Caco-2 (cell line): ENCODE measurements at regions of chr14 and their contacts with region 1.

Region 1: DNA sequence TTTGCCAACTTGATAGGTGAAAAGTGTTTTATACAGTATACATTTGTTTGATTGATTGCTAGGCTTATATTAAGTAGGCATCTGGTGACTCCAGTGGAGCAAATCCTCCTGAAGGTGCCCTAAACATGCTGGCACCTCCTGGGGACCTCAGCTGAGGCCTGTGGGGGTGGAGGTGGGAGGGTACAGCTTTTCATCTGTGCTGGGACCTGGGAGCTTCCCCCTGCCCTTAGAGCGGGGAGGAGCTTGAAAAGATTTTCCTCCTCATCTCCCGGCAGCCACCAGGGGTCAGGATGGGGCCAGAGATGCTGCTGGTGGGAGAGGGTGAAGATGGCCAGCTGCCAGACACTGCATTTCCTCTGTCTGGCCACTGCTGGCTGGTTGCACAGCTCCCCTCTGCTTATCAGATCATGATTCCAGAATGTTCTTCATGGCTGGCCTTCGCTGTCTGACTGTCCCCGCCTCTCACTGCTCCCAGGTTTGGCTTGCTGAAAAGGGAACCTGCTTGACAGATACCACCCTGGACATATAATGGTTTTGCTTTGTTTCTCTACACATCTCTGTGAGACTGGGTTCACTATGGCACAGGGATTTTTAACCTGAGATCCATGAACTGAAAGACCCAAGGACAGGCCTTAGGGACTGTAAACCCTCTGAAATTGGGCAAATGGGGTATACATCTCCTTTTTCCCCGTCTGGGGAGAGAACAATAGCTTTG is 10.5 kb upstream of the JPH4 start:
- DNase-seq: peak; percentile 88 to 90
- H3K4me3 ChIP-seq: no peak overlapping the region
- H3K4me3 Mint-ChIP-seq: no peak overlapping the region
- H3K27ac Mint-ChIP-seq: no peak overlapping the region
- H3K4me1 ChIP-seq: no peaks in the 10 kb centered on the region
- H3K4me1 Mint-ChIP-seq: no peaks in the 10 kb centered on the region
- H3K27me3 ChIP-seq: no peaks in the 10 kb centered on the region
- H3K27me3 Mint-ChIP-seq: peaks cover 2% of the 10 kb centered on the region
- CTCF ChIP-seq: peak; percentile 85 to 94

Region 2: DNA sequence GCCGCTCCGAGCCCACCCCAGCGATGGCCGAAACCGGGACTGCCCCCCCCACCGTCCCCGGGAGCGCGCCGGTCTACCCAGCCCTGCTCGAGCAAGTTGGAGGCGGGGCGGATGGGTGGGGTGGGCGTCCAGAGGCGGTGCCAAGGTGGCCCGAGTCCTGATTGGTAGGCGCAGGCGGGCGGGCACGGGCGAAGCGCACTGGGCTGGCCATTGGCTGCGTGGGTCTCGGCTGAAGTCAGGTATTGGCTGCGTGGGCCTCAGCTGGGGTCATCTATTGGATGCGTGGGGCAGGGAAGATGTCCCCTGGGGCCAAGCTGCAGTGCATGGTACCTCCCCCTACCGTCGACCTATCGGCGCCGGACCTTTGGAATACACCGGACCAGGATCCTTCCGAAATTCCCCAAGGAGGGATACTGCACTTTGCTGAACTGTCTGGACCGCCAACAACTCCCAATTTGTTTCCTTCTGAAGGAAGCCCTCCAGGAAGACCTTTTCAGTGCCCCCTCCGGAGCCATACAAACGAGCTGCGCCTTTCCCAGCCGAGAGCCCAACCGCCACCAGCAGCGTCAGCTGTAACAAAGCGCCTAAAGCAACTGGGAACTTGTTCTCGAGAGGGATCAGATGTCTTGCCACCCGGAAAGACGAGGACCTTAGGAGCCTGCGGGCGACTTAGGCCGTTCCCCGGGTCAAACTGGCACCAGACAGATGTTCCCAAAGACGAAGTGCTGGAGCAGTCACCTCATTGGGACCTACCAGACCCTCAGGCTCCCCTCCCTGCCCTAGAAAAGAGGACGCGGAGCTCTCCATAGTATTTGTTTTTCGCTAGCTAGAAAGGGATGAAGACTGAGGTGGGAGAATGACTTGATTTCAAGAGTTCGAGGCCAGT is 302.8 kb before region 1 on chr14 and contains the start of gene HOMEZ:
- CTCF ChIA-PET with region 1: no interaction called
- POLR2A ChIA-PET with region 1: no interaction called
- intact Hi-C with region 1: no loop called
- DNase-seq: peak; percentile 99
- H3K4me3 ChIP-seq: peak within 1 kb of the TSS; percentile 75
- H3K4me3 Mint-ChIP-seq: peak within 1 kb of the TSS; percentile 90
- H3K27ac Mint-ChIP-seq: peak within 1 kb of the TSS; percentile 95
- H3K4me1 ChIP-seq: 0 out of 2 replicates have a peak, but pooled peaks cover 4% of the 10 kb centered on the region
- H3K4me1 Mint-ChIP-seq: peaks cover 6% of the 10 kb centered on the region
- H3K27me3 ChIP-seq: no peaks in the 10 kb centered on the region
- H3K27me3 Mint-ChIP-seq: no peaks in the 10 kb centered on the region
- CTCF ChIP-seq: peak in 1 of 2 experiments; percentile 18
- total RNA-seq, gene HOMEZ: 7.4 and 7.6 TPM in 2 replicates

Region 3: GRCh38 chr14:23631702-23632460 is 42.8 kb after region 1 on chr14:
- CTCF ChIA-PET with region 1: interaction called, 20 read pairs
- POLR2A ChIA-PET with region 1: no interaction called
- intact Hi-C with region 1: loop called (anchors 1 kb)
- DNase-seq: peak in 1 of 2 experiments; percentile 71
- H3K4me3 ChIP-seq: no peak overlapping the region
- H3K4me3 Mint-ChIP-seq: no peak overlapping the region
- H3K27ac Mint-ChIP-seq: no peak overlapping the region
- H3K4me1 ChIP-seq: no peaks in the 10 kb centered on the region
- H3K4me1 Mint-ChIP-seq: no peaks in the 10 kb centered on the region
- H3K27me3 ChIP-seq: no peaks in the 10 kb centered on the region
- H3K27me3 Mint-ChIP-seq: no peaks in the 10 kb centered on the region
- CTCF ChIP-seq: peak; percentile 83 to 89

Region 4: DNA sequence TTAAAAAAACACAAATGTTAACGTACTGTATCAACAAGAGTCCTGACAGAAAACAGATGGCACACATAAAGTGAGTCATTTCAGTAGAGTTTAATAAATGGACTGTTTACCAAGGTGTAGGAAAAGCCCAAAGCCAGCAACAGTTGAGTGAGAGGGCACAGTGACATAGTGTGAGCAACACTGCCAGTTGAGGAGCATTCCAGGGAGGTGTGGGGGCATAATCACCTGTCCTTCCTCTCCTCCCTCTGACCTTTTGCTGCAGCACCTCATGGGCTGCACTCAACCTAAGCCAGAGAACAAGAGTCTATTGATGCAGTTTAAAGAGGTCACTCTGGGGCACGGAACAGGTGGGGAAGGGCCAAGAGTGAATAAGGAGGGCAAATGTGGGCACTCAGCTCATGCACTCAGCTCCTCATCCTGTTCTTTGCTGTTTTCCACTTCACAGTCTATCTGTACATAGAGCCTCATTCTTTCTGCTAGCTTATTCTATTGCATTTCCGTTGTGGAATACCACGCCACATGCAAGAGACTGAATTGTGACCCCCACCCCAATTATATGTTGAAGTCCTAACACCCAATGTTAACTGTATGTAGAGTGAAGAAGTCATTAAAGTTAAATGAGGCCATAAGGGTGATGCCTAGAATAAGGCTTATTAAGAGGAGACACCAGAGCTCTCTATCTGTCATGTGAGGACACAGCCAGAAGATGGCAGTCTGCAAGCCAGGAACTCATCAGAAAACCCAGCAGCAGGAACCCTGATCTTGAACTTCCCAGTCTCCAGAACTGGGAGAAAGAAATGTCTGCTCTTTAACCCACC is 76.5 kb after region 1 on chr14:
- CTCF ChIA-PET with region 1: interaction called, 12 read pairs
- POLR2A ChIA-PET with region 1: no interaction called
- intact Hi-C with region 1: loop called (anchors 1 kb)
- DNase-seq: peak in 1 of 2 experiments; percentile 47
- H3K4me3 ChIP-seq: no peak overlapping the region
- H3K4me3 Mint-ChIP-seq: no peak overlapping the region
- H3K27ac Mint-ChIP-seq: no peak overlapping the region
- H3K4me1 ChIP-seq: no peaks in the 10 kb centered on the region
- H3K4me1 Mint-ChIP-seq: no peaks in the 10 kb centered on the region
- H3K27me3 ChIP-seq: no peaks in the 10 kb centered on the region
- H3K27me3 Mint-ChIP-seq: peaks cover 18% of the 10 kb centered on the region
- CTCF ChIP-seq: peak; percentile 22 to 63

Region 5: GRCh38 chr14:23727566-23728335 is 138.7 kb after region 1 on chr14:
- CTCF ChIA-PET with region 1: interaction called, 7 read pairs
- POLR2A ChIA-PET with region 1: no interaction called
- intact Hi-C with region 1: loop called (anchors 1 kb)
- DNase-seq: peak; percentile 69 to 73
- H3K4me3 ChIP-seq: no peak overlapping the region
- H3K4me3 Mint-ChIP-seq: no peak overlapping the region
- H3K27ac Mint-ChIP-seq: no peak overlapping the region
- H3K4me1 ChIP-seq: no peaks in the 10 kb centered on the region
- H3K4me1 Mint-ChIP-seq: no peaks in the 10 kb centered on the region
- H3K27me3 ChIP-seq: no peaks in the 10 kb centered on the region; the same call in 1 of the 2 replicates
- H3K27me3 Mint-ChIP-seq: peaks cover 7% of the 10 kb centered on the region
- CTCF ChIP-seq: peak; percentile 55 to 72

Region 6: DNA sequence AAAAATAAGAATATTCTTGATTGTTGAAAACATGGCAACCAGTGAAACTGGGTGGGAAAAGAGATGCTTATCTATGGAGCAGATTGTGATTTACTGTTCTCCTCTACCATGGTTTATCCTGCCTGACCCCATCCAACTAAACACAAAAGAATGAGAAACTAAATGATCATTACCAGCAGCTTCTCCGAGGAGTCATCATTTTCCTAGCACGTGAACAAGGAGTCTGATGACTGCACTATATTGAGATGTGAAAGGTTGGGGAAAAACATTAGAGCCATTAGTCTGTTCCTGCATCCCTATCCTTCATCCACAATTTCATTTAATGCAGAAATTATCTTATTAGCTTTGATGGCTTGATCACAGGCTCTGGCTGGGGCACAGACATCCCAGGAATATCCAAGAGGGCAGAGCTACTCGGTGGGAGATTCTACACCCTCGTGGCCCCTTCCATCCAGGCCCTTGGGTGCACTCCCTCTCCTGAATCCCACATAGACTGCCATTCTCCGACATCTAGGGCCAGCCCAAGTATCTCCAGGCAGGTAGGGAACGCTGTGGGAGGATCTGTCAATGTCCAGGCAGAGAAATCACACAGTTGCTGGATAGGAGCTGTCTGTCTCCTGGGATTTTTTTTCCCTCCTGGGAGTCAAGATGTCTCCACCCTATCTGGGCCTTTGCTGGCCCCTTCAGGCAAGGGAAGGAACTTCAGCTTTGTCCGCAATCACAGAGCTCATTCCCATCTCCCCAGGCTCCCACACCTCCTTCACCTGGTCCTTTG is 321.2 kb after region 1 on chr14:
- CTCF ChIA-PET with region 1: interaction called, 53 read pairs
- POLR2A ChIA-PET with region 1: no interaction called
- intact Hi-C with region 1: loop called (anchors 1 kb)
- DNase-seq: peak; percentile 63 to 76
- H3K4me3 ChIP-seq: no peak overlapping the region
- H3K4me3 Mint-ChIP-seq: no peak overlapping the region
- H3K27ac Mint-ChIP-seq: no peak overlapping the region
- H3K4me1 ChIP-seq: no peaks in the 10 kb centered on the region
- H3K4me1 Mint-ChIP-seq: no peaks in the 10 kb centered on the region
- H3K27me3 ChIP-seq: no peaks in the 10 kb centered on the region
- H3K27me3 Mint-ChIP-seq: peaks cover 15% of the 10 kb centered on the region
- CTCF ChIP-seq: peak; percentile 81 to 84

Region 7: GRCh38 chr14:23929822-23930294 is 340.8 kb after region 1 on chr14:
- CTCF ChIA-PET with region 1: interaction called, 4 read pairs
- POLR2A ChIA-PET with region 1: no interaction called
- intact Hi-C with region 1: loop called (anchors 5 kb)
- DNase-seq: peak; percentile 67 to 85
- H3K4me3 ChIP-seq: no peak overlapping the region
- H3K4me3 Mint-ChIP-seq: no peak overlapping the region
- H3K27ac Mint-ChIP-seq: no peak overlapping the region
- H3K4me1 ChIP-seq: no peaks in the 10 kb centered on the region
- H3K4me1 Mint-ChIP-seq: no peaks in the 10 kb centered on the region
- H3K27me3 ChIP-seq: no peaks in the 10 kb centered on the region
- H3K27me3 Mint-ChIP-seq: peaks cover 11% of the 10 kb centered on the region
- CTCF ChIP-seq: peak; percentile 95 to 97

Region 8: DNA sequence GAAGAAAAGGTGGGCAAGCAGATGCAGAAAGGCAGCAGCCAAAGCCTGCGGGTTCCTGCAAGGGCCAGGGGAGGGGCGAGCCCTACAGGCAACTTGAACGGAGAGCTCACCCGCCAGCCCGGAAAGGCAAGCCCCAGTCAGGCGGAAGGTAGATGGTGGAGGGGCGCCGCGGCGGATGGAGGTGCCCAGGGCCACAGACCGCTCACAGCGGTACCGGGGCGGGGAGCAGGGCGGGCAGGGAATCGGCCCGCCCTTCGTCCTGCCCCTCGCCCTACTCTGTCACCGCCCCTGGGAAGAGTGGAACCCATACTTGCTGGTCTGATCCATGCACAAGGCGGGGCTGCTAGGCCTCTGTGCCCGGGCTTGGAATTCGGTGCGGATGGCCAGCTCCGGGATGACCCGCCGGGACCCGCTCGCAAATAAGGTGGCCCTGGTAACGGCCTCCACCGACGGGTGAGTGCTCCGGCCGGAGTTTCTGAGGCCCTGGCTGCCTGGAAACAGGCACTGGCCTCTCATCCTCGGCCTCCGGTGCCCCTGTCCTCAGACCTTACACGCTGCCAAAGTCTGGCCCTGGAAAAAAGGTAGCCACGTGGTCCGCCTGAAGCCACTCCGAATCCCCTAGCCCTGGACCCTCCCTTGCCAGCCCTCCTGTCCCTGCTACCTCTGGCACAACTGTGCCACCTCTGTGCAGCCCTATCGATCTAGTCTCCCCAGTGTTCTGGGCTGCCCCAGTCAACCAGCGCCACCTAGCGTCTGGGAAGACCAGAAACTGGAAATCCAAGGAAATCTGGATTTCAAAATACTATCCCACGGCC is 364.6 kb after region 1 on chr14 and contains the start of gene DHRS4:
- CTCF ChIA-PET with region 1: no interaction called
- POLR2A ChIA-PET with region 1: no interaction called
- intact Hi-C with region 1: loop called (anchors 1 kb)
- DNase-seq: peak; percentile 80 to 83
- H3K4me3 ChIP-seq: peak within 1 kb of the TSS; percentile 76
- H3K4me3 Mint-ChIP-seq: peak within 1 kb of the TSS; percentile 96
- H3K27ac Mint-ChIP-seq: peak within 1 kb of the TSS; percentile 86
- H3K4me1 ChIP-seq: no peaks in the 10 kb centered on the region
- H3K4me1 Mint-ChIP-seq: no peaks in the 10 kb centered on the region
- H3K27me3 ChIP-seq: no peaks in the 10 kb centered on the region
- H3K27me3 Mint-ChIP-seq: no peaks in the 10 kb centered on the region
- CTCF ChIP-seq: peak; percentile 91 to 92
- total RNA-seq, gene DHRS4: 8.0 and 8.6 TPM in 2 replicates